ENCODE measurements at regions of chr3 and their contacts with region 1.

Region 1: GRCh38 chr3:69051756-69052471 is at the start of gene TMF1:
- DNase-seq: peak; percentile 99
- H3K4me3 ChIP-seq: peak within 1 kb of the TSS; percentile 74 to 88
- H3K27ac ChIP-seq: peak within 1 kb of the TSS; percentile 94 to 96
- H3K4me1 ChIP-seq: peaks cover 0 to 46% (median 22%) of the 10 kb centered on the region in 4 donors
- H3K27me3 ChIP-seq: no peaks in the 10 kb centered on the region
- CTCF ChIP-seq: no peak

Region 2: DNA sequence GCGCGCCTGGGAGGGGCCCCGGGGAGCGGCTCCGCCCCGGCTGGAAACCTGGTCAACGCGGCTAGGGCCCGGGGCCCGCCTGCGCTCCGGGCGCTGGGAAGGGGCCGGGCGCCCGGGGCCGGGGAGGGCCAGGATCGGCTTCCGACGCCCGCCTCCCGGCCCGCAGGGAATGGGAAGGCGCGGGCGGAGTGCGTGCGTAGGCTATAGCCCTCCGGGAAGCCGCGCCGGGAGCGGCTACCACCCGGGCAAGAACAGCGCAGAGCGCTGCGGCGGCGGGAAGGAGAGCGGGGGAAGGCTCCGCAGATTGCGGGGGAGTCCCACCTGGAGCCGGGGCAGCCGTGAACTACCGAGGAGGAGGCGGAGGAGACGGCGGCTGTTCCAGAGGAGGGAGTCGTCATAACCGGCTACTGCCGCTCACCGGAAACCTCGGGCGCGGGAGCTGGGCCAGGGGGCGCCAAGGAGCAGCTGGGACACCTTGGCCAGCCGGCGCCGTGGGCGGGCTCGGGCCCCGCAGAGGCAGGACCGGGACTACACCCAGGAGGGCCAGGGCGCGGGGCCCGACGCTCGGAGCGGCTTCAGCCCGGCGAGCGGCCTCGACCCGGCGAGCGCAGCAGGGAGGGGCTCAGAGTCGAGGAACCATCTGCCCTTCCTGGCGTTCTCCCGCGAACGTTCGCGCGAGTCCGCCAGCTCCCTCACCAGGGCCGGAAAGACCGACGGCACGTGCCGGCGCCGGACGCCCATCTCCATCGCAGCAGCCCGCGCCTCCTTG is 38.5 kb before region 1 on chr3 and contains the start of gene EOGT:
- intact Hi-C with region 1: loop called (anchors 10 kb)
- DNase-seq: peak; percentile 87 to 96
- H3K4me3 ChIP-seq: peak within 1 kb of the TSS; percentile 88 to 92
- H3K27ac ChIP-seq: peak within 1 kb of the TSS; percentile 99
- H3K4me1 ChIP-seq: peaks cover 0 to 59% (median 33%) of the 10 kb centered on the region in 4 donors
- H3K27me3 ChIP-seq: no peaks in the 10 kb centered on the region
- CTCF ChIP-seq: peak; percentile 54 to 63

Region 3: DNA sequence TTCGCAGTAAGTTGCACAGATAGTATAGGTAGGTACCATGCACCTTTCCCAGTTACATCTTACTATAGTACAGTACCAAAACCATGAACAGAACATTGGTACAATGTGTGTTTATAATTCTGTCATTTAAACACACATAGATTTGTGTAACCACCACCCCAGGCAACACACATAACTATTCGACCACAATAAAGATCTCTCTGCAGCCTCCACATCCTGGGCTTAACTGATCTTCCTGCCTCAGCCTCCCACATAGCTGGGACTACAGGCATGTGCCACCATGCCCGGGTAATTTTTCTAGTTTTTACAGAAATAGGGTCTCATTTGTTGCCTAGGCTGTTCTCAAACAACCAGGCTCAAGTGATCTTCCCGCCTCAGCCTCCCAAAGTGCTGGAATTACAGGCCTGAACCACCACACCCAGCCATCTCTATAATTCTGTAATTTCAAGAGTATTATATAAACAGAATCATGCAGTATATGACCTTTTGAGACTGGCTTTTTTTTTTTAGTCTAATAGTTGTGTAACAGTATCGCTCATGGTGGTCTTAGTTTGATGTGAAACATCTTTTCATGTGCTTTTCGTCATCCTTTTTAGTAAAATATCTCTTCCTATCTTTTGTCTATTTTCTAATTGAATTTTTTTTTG is 13.5 kb after region 1 on chr3:
- intact Hi-C with region 1: no loop called
- DNase-seq: no peak
- H3K4me3 ChIP-seq: no peak overlapping the region
- H3K27ac ChIP-seq: no peak overlapping the region
- H3K4me1 ChIP-seq: no peaks in the 10 kb centered on the region
- H3K27me3 ChIP-seq: no peaks in the 10 kb centered on the region
- CTCF ChIP-seq: no peak